ENCODE measurements at regions of chr10 and their contacts with region 1.

Region 1: GRCh38 chr10:99612167-99612831 is 7.9 kb downstream of the SLC25A28 start:
- DNase-seq: peak; percentile 62
- ATAC-seq: peak; percentile 91
- H3K4me3 ChIP-seq: no peak overlapping the region
- H3K27ac ChIP-seq: no peak overlapping the region
- H3K4me1 ChIP-seq: no peaks in the 10 kb centered on the region
- H3K27me3 ChIP-seq: no peaks in the 10 kb centered on the region
- CTCF ChIP-seq: peak; percentile 92
- POLR2A ChIP-seq: peak; percentile 43; the same call in 1 of the 2 replicates
- RAD21 ChIP-seq: peak; percentile 90

Region 2: GRCh38 chr10:98425511-98426352 is 1186.6 kb before region 1 on chr10:
- CTCF ChIA-PET with region 1: no interaction called
- POLR2A ChIA-PET with region 1: no interaction called
- dilution Hi-C with region 1: no loop called
- in situ Hi-C with region 1: no loop called
- intact Hi-C with region 1: no loop called
- DNase-seq: peak; percentile 26
- ATAC-seq: peak; percentile 87
- H3K4me3 ChIP-seq: no peak overlapping the region
- H3K27ac ChIP-seq: no peak overlapping the region
- H3K4me1 ChIP-seq: no peaks in the 10 kb centered on the region
- H3K27me3 ChIP-seq: no peaks in the 10 kb centered on the region
- CTCF ChIP-seq: peak; percentile 58
- POLR2A ChIP-seq: no peak
- RAD21 ChIP-seq: peak; percentile 53

Region 3: GRCh38 chr10:99395750-99396445 is 216.4 kb before region 1 on chr10:
- CTCF ChIA-PET with region 1: interaction called, 3 read pairs
- POLR2A ChIA-PET with region 1: no interaction called
- dilution Hi-C with region 1: no loop called
- in situ Hi-C with region 1: loop called (anchors 5 kb)
- intact Hi-C with region 1: loop called (anchors 1 kb)
- DNase-seq: peak; percentile 83
- ATAC-seq: peak; percentile 69
- H3K4me3 ChIP-seq: no peak overlapping the region
- H3K27ac ChIP-seq: peak overlapping the region; percentile 7; the same call in 1 of the 2 replicates
- H3K4me1 ChIP-seq: peaks cover 12% of the 10 kb centered on the region
- H3K27me3 ChIP-seq: no peaks in the 10 kb centered on the region; the same call in 1 of the 2 replicates
- CTCF ChIP-seq: no peak
- POLR2A ChIP-seq: no peak
- RAD21 ChIP-seq: no peak

Region 4: DNA sequence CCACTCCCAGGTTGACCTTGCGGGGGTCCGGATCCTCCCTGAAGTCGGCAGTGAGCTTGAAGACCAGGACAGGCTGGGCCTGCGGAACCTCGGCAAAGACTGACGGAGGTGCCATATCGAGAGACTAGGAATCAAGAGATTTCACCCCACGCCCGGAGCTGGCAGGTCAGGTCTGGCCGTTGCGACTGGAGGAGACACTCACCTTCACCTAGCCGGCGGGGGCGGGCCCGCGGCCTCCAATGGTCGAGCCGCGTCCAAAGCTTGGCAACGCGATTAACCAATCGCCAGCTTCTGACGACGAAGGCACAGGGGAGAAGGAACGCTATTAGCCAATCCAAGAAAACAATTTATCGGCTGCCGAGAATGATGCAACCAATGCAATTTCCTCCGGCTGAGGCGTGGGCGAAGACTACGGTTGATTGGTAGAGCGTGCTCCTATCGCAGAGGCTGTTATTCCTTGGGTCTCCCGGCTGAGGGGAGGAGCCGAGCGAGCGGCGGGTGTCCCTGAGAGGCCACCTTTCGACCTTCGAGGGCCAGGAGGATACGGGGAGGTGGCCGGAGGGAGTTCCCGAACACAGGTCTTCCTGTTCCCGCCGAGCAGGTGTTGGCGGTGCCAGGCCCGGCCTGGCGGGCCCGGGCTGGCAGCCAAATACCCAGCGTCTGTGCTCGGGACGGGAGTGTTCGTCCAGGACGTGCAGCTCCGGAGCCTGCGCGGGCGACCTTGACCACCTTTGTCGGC is 181.7 kb before region 1 on chr10 and contains the start of gene GOT1:
- CTCF ChIA-PET with region 1: interaction called, 15 read pairs
- POLR2A ChIA-PET with region 1: interaction called, 3 read pairs
- dilution Hi-C with region 1: no loop called
- in situ Hi-C with region 1: loop called (anchors 5 kb)
- intact Hi-C with region 1: no loop called
- DNase-seq: peak; percentile 99
- ATAC-seq: peak; percentile 97
- H3K4me3 ChIP-seq: peak within 1 kb of the TSS; percentile 73
- H3K27ac ChIP-seq: peak within 1 kb of the TSS; percentile 61
- H3K4me1 ChIP-seq: peaks cover 2% of the 10 kb centered on the region; the same call in 1 of the 2 replicates
- H3K27me3 ChIP-seq: no peaks in the 10 kb centered on the region
- CTCF ChIP-seq: no peak; the same call in 1 of the 2 replicates
- POLR2A ChIP-seq: peak; percentile 94
- RAD21 ChIP-seq: no peak
- total RNA-seq, gene GOT1: 38.6 and 46.1 TPM in 2 replicates

Region 5: DNA sequence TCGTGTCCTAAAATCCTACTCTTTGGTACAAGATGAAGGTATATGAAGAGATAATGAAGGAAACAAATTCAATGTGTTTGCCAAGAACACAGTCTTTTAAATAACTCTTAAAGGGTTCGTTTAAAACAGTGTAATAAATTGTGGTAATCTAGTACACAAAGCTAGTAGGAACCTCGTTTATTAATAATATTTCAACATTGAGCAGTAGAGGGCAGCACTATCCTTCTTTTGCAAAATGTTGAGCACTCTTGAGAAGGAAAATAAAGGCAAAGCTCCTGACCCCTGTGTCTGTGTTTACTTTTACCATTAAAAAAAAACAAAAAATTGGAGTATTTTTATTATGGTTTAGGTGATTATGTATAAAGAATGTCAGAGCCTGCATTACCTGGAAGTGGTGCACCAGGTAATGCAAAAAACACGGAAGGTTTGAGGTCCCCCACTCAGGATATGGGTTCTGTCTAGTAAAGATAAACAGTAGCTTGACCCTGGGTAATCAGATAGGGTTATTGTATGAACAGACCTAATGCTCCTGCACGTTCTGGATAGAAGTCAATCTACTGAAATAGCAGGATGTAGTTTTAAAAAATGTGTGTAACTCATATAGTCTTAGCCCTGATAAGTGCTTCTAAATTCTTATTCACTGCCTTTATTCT is 176.2 kb before region 1 on chr10:
- CTCF ChIA-PET with region 1: interaction called, 15 read pairs
- POLR2A ChIA-PET with region 1: interaction called, 3 read pairs
- dilution Hi-C with region 1: no loop called
- in situ Hi-C with region 1: loop called (anchors 5 kb)
- intact Hi-C with region 1: loop called (anchors 1 kb)
- DNase-seq: peak; percentile 59
- ATAC-seq: peak; percentile 87
- H3K4me3 ChIP-seq: no peak overlapping the region
- H3K27ac ChIP-seq: no peak overlapping the region
- H3K4me1 ChIP-seq: no peaks in the 10 kb centered on the region
- H3K27me3 ChIP-seq: no peaks in the 10 kb centered on the region
- CTCF ChIP-seq: peak; percentile 66
- POLR2A ChIP-seq: no peak
- RAD21 ChIP-seq: peak; percentile 70

Region 6: DNA sequence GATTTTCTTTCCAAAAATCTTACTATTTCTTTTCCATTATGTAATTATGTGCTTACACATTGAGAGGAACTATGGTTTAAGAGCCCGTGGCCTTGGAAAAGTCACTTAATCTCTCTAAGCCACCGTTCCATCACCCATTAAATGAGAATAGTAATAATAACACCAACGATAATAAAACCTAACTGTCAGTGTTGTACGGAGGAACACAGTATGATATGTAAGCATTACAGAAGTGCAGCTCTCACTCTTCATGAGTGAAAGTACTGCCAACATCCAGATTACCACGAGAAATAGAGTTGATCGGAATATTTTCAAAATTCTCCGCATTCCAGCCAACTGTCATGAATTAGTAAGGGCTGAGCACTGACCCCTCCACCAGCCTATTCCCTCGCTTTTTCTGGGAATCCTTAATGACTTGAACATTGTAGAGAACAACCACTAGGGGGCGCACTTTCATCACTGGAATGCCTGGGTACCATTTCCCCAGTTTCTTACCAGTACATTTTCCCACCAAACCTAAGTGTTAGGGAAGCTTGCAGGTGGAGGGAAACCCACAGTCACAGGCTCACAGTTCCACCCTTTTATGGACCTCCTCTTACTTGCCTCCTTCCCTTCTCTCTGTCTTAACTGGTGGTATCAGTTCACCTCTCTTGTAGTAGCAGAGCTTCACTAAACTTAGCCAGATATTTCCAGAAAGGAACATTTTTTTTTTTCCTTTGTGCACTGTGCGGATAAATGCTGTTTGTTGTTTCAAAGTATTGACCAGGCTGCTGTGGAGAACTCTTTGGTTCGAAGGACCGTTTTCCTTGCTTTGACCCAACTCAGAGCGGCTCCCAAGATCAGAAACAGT is 51.8 kb before region 1 on chr10:
- CTCF ChIA-PET with region 1: interaction called, 3 read pairs
- POLR2A ChIA-PET with region 1: no interaction called
- dilution Hi-C with region 1: no loop called
- in situ Hi-C with region 1: no loop called
- intact Hi-C with region 1: loop called (anchors 1 kb)
- DNase-seq: peak; percentile 47
- ATAC-seq: 0 out of 2 replicates have a peak, but pooled peaks have one; percentile 35
- H3K4me3 ChIP-seq: no peak overlapping the region
- H3K27ac ChIP-seq: no peak overlapping the region
- H3K4me1 ChIP-seq: no peaks in the 10 kb centered on the region
- H3K27me3 ChIP-seq: peaks cover 21% of the 10 kb centered on the region
- CTCF ChIP-seq: peak; percentile 63
- POLR2A ChIP-seq: no peak
- RAD21 ChIP-seq: peak; percentile 62

Measured in IMR-90 (cell line).